Common myeloid progenitor, CD34-positive (primary cell): ENCODE measurements at regions of chr1 and their contacts with region 1.

Region 1: DNA sequence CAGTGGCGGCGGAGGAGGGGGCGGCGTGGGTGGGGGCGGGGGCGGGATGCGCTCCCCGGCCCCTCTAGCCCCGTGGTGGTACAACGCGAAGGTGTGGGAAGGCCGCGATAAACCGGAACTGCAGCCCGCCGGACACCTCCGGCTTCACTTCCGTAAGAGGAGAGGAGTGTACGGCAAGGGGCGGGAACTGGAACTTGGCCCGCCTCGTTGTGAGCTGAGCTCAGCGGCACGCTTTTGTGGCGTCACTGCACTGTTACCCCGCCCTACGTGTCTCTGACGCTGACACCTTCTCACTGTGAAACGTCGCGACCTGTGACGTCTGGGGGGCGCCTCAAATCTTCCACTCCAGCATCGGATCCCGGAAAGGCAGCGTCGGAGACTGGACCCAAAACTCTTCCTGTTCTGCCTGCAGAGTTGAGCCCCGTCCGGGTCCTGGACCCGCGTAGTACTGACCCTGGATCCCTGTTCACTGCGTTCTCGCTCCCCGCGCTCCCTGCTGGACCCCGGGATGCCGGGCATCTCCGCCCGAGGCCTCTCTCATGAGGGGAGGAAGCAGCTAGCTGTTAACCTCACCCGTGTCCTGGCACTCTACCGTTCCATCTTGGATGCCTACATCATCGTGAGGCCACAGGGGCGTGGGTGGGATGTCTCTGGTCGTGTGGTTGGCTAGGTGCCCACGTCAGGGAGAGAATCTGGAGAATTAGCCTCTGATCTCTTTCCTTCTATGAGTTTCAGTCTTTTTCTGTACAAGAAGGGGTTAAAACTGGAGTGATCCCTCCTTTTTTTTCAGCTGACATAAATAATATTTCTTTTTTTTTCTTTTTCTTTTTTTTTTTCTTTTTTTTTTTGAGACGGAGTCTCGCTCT is at the start of gene ISG20L2:
- DNase-seq: peak; percentile 99
- H3K4me3 ChIP-seq: peak within 1 kb of the TSS; percentile 64 to 98 (median 94)
- H3K27ac ChIP-seq: peak within 1 kb of the TSS; percentile 76 to 88
- H3K4me1 ChIP-seq: peaks cover 24 to 45% (median 39%) of the 10 kb centered on the region in 4 experiments
- H3K27me3 ChIP-seq: no peaks in the 10 kb centered on the region

Region 2: DNA sequence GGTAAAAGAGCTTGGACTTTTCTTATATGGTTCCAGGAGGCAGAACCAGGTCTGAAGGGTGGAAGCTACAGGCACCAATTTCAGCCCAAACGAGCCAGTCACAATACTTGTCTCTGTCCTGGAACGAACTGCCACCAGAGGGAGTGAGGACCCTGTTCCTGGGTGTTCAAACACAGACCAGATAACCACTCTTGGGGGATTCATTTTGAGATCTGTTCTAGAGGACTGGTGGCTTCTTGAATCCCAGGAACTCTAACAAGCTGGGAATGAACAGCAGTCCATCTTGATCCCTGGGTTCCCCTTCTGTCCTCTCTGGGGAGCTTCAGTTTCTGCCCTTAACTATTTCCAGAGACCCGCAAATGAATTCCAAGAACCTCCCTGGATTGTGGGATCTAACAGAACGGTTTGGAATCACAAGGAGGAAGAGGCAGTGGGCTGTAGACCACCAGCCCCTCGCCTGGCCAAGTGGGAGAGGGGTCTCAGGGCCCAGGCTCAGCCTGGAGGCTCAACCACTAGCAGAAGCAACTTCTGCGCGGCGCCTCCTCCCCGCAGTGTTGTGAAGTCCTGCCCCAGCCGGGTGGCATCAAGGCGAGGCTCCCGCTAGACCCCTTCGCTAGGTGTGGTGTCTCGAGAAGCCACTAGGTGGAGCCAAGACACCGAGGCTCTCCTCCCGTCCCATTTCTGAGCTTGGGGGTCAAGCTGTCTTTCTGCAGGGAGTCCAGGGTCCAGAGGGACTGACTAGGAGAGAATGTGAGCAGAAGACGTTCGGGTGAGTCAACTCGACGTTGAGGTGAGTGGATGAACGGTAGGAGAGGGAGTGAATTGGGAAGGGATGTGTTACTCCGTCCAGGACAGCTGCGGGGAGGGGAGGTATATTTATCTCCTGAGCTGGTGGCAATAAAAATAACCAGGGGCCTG is 39.5 kb before region 1 on chr1:
- CTCF ChIA-PET with region 1: interaction called, 393 read pairs
- POLR2A ChIA-PET with region 1: interaction called, 9 read pairs
- DNase-seq: peak; percentile 75 to 86 (median 85)
- H3K4me3 ChIP-seq: peak overlapping the region in 1 of 7 experiments; percentile 11
- H3K27ac ChIP-seq: no peak overlapping the region
- H3K4me1 ChIP-seq: peaks cover 0 to 42% (median 29%) of the 10 kb centered on the region in 4 experiments
- H3K27me3 ChIP-seq: peaks cover 0 to 59% (median 31%) of the 10 kb centered on the region in 5 experiments

Region 3: GRCh38 chr1:156714830-156715229 is 14.0 kb before region 1 on chr1:
- CTCF ChIA-PET with region 1: interaction called, 11 read pairs
- POLR2A ChIA-PET with region 1: no interaction called
- DNase-seq: no peak
- H3K4me3 ChIP-seq: no peak overlapping the region
- H3K27ac ChIP-seq: no peak overlapping the region
- H3K4me1 ChIP-seq: no peaks in the 10 kb centered on the region
- H3K27me3 ChIP-seq: no peaks in the 10 kb centered on the region

Region 4: DNA sequence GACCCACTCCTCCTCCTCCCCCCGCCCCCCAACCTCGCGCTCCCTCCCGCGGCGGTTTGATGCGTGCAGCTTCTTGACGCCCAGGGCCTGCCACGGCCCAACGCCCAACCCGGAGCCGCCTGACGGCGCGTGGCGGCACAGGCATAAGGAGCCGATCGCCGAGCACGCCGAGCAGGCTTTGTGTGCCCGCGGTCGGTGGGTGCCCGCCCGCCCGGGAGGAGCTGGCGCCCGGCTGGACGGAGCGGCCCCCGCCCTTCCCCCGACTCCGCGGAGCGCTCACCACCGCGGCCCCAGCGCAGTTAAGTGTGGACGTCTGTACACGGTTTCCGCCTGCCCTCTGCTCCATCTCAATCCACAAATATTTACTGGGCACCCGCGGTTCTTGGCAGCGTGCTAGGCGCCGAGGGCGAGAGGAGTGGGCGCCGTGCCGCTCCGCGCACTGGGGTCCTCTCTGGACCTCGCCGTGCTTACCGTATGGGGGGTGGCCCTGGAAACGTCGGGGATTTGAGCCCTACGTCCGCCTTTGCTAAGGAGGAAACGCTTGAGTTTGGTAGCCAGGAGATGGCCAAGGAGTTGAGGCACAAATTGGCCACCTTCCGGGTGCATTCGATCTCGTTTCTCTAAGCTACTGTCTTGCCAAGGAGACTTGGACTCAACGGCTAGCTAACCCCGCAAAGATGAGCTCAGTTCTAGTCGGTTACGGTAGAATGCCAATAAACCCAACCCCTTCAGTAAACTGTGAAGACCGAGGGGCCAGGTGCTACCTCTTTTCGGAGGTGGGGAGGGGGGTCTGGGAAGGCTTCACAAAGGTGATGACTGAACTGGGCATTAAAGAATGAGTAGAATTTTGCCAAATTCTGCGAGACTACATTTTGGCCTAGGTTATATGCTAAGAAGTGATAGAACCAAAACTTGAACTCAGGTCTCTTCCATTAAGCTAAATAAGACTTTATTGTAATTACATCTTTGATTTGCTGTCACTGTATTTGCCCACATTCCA is 23.2 kb after region 1 on chr1:
- CTCF ChIA-PET with region 1: interaction called, 32 read pairs
- POLR2A ChIA-PET with region 1: interaction called, 10 read pairs
- DNase-seq: peak; percentile 96 to 98 (median 98)
- H3K4me3 ChIP-seq: peak overlapping the region; percentile 72 to 100 (median 97)
- H3K27ac ChIP-seq: peak overlapping the region; percentile 76 to 91
- H3K4me1 ChIP-seq: peaks cover 26 to 55% (median 50%) of the 10 kb centered on the region in 4 experiments
- H3K27me3 ChIP-seq: no peaks in the 10 kb centered on the region

Region 5: DNA sequence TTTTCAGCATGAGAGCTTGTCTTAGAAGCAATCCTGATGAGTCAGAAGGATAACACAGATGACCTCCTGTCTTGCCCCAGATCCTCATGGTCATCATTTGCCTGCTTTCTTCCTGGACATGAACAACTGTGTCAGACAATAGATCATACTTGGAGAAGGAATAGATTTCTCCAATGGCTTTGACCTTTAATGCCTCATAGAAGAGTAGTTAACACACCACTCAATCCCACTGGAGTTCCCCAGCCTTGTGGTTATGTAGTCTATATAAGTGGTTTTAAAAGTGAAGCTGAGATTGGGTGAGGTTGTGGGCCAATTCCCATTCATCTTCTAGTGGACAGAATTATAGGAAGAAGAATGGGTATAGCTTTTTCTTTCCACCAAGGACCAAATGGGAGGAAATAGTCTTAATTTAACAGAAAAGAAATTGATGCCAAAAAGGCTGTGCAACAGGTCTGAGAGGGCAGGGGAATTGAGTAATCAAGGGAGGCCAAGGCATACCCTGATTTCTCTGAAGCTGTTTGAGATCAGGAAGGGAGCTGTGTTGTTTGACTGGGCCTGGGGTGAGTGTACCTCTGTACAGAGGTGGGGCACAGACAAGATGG is 52.9 kb after region 1 on chr1:
- CTCF ChIA-PET with region 1: interaction called, 14 read pairs
- POLR2A ChIA-PET with region 1: no interaction called
- DNase-seq: no peak
- H3K4me3 ChIP-seq: no peak overlapping the region
- H3K27ac ChIP-seq: no peak overlapping the region
- H3K4me1 ChIP-seq: peaks cover 11 to 34% (median 17%) of the 10 kb centered on the region in 4 experiments
- H3K27me3 ChIP-seq: no peaks in the 10 kb centered on the region

Region 6: DNA sequence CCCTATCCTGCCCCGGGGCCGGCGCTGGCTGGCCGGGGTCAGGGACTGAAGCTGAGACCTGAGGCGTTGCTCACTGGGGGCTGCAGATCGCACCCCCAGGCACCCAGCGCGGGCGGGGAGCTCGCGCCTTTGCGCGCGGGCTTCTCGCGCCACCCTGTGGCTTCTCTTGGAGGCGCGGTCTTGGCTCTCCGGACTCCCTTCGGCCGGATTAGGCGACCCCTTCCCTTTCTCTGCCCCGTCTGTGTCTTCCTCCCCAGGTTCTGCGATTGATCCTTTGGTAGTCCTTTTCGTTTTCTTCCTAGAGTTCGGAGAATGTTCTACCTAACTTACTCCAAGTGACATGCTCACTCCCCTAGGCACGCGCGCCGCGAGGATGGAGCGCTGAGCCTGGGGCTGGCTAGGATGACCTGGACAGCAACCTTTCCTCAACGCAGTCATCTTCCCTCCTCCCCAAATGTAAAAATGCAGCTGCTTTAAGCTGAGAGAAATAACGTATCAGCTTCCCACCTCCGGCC is 131.3 kb after region 1 on chr1:
- CTCF ChIA-PET with region 1: interaction called, 49 read pairs
- POLR2A ChIA-PET with region 1: interaction called, 3 read pairs
- DNase-seq: peak; percentile 31 to 61 (median 57)
- H3K4me3 ChIP-seq: peak overlapping the region; percentile 22 to 69 (median 54)
- H3K27ac ChIP-seq: no peak overlapping the region
- H3K4me1 ChIP-seq: peaks cover 2 to 43% (median 39%) of the 10 kb centered on the region in 4 experiments
- H3K27me3 ChIP-seq: peaks cover 0 to 78% (median 47%) of the 10 kb centered on the region in 5 experiments